Activated CD4-positive, alpha-beta T cell treated with anti-CD3 and anti-CD28 coated beads for 36 hours (primary cell): ENCODE measurements at regions of chr9 and their contacts with region 1.

Region 1: GRCh38 chr9:78035383-78035993 is 3.9 kb upstream of the GNAQ start:
- DNase-seq: peak; percentile 69
- ATAC-seq: peak; percentile 21
- H3K4me3 Mint-ChIP-seq: no peak overlapping the region
- H3K27ac Mint-ChIP-seq: no peak overlapping the region
- H3K4me1 Mint-ChIP-seq: peaks cover 30% of the 10 kb centered on the region
- H3K27me3 Mint-ChIP-seq: no peaks in the 10 kb centered on the region

Region 2: DNA sequence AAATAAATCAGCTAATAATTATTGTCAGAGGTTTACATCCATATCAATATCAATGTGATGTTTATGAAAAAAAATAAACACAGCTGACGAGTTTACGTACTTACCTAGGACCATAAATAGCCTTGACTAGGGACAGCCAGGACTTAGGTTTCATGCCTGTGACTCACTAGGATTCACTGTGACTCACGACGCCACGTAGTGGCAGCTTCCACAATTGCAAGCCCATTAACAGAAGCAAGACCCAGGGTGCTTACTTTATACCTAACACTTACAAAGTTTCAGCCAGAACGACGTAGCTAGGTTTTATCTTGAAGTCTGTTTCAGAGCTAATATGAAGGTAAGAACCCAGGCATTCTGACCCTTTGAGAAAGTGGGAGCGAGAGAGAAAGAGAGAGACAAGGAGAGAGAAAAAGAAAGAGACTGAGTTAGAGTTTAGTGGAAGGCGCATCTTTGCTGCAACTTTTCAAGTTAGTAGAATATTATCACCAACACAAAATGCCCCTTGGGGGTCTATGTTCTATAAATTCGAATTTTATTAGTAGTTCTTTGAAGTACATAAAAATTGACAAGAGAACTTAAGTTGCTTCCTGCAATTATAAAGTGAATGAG is 578.6 kb before region 1 on chr9:
- CTCF ChIA-PET with region 1: interaction called, 12 read pairs
- POLR2A ChIA-PET with region 1: no interaction called
- intact Hi-C with region 1: loop called in 1 of 2 experiments (anchors 5 kb)
- DNase-seq: peak; percentile 92
- ATAC-seq: peak; percentile 83
- H3K4me3 Mint-ChIP-seq: no peak overlapping the region
- H3K27ac Mint-ChIP-seq: no peak overlapping the region
- H3K4me1 Mint-ChIP-seq: peaks cover 22% of the 10 kb centered on the region
- H3K27me3 Mint-ChIP-seq: no peaks in the 10 kb centered on the region

Region 3: GRCh38 chr9:77770340-77770739 is 265.1 kb before region 1 on chr9:
- CTCF ChIA-PET with region 1: no interaction called
- POLR2A ChIA-PET with region 1: no interaction called
- intact Hi-C with region 1: loop called in 1 of 2 experiments (anchors 10 kb)
- DNase-seq: no peak
- ATAC-seq: no peak
- H3K4me3 Mint-ChIP-seq: no peak overlapping the region
- H3K27ac Mint-ChIP-seq: no peak overlapping the region
- H3K4me1 Mint-ChIP-seq: peaks cover 14% of the 10 kb centered on the region
- H3K27me3 Mint-ChIP-seq: no peaks in the 10 kb centered on the region

Region 4: GRCh38 chr9:78023003-78023741 is 12.3 kb before region 1 on chr9:
- CTCF ChIA-PET with region 1: interaction called, 19 read pairs
- POLR2A ChIA-PET with region 1: no interaction called
- intact Hi-C with region 1: no loop called
- DNase-seq: no peak
- ATAC-seq: peak; percentile 81
- H3K4me3 Mint-ChIP-seq: peak overlapping the region; percentile 50
- H3K27ac Mint-ChIP-seq: peak overlapping the region; percentile 66
- H3K4me1 Mint-ChIP-seq: peaks cover 55% of the 10 kb centered on the region
- H3K27me3 Mint-ChIP-seq: no peaks in the 10 kb centered on the region

Region 5: GRCh38 chr9:78121488-78121887 is 86.0 kb after region 1 on chr9:
- CTCF ChIA-PET with region 1: interaction called, 13 read pairs
- POLR2A ChIA-PET with region 1: no interaction called
- intact Hi-C with region 1: loop called (anchors 2 to 5 kb)
- DNase-seq: peak; percentile 79
- ATAC-seq: no peak
- H3K4me3 Mint-ChIP-seq: no peak overlapping the region
- H3K27ac Mint-ChIP-seq: no peak overlapping the region
- H3K4me1 Mint-ChIP-seq: peaks cover 37% of the 10 kb centered on the region
- H3K27me3 Mint-ChIP-seq: no peaks in the 10 kb centered on the region

Region 6: DNA sequence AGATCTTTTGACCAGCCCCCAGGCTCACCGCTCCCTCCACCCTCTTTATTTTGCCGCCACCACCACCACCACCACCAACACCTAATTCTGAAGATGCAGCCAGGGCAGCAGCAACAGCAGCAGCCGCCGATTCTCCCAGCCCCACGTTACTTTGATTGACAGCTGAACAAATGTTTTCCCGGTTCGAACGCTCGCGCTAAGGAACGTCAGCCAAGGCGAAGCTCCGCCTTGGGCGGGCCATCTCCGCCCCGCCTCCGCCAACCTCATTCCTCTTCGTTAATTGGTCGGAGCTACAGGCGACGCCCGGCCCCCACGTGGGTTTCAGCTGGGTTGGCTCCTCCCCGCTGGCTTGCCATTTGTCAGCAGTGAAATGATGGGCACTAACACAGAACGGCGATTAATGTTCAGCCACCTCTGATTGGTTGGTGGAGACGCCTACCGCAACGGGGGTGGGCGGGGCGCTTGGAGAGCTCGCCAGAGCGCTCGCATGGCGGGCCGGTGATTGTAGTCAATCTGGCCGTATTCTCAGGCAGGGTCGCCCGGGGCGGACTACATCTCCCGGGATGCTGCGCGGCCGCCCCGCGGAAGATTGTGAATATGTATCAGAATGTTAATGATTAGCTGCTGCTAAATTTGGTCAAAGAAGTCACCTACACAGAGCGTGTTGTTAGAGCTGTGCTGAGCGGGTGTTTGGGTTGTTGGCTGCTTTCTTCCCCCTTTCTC is 1536.0 kb after region 1 on chr9 and contains the start of gene TLE4:
- CTCF ChIA-PET with region 1: no interaction called
- POLR2A ChIA-PET with region 1: no interaction called
- intact Hi-C with region 1: loop called in 1 of 2 experiments (anchors 10 kb)
- DNase-seq: peak; percentile 100
- ATAC-seq: peak; percentile 90
- H3K4me3 Mint-ChIP-seq: no peak within 1 kb of the TSS
- H3K27ac Mint-ChIP-seq: peak within 1 kb of the TSS; percentile 58
- H3K4me1 Mint-ChIP-seq: peaks cover 31% of the 10 kb centered on the region
- H3K27me3 Mint-ChIP-seq: peaks cover 12% of the 10 kb centered on the region
- total RNA-seq, gene TLE4: 11.8 to 15.5 TPM